Activated T-helper 1 cell treated with anti-CD3 and anti-CD28 coated beads, Interleukin-12 subunit alpha, Interleukin-12 subunit beta, Interleukin-2, Interleukin-4 antibody, amounts not matched to agents 30 ng/mL and 10 ng/mL and 1 ng/mL, durations not matched to agents 14 hours and 24 hours and 36 hours (primary cell): ENCODE measurements at regions of chr16 and their contacts with region 1.

Region 1: GRCh38 chr16:24253192-24253591 is 2.9 kb upstream of the CACNG3 start:
- DNase-seq: peak; percentile 6
- H3K4me3 Mint-ChIP-seq: no peak overlapping the region
- H3K27ac Mint-ChIP-seq: no peak overlapping the region
- H3K4me1 Mint-ChIP-seq: no peaks in the 10 kb centered on the region
- H3K27me3 Mint-ChIP-seq: peaks cover 28% of the 10 kb centered on the region

Region 2: DNA sequence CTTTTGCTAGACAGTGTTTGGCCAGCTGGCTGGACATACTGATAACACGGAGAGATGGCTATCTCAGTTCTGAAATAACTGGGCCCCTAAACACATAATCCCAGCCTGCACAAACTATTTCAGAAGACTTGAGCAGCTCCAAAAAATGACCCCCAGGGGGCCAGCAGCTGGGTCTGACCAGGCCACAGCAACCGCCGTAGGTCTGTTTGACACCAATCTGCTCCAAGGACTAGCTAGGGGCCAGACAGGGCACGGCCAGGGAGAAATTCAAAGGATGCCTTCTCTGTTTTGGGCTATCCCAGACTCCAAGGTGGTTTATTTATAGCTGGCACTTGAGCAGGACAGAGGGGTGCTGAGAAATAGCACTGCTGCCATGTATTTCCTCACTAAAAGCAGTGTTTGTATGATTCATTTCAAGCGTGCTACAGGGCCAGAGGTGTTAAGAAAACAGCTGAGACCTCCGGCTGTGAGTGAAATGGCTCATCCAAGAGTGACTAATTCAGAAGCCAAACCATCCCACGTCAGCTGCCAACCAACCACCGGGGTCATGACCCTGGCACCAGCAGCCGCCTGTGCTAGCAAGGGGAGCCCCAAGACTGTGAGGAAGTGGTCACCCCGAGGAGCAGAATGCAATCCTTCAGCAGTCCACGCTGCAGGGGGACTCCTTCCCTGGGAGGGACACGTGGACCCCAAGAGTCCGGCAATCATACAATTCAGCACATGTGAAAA is 748.6 kb before region 1 on chr16:
- intact Hi-C with region 1: loop called (anchors 5 kb)
- DNase-seq: peak; percentile 68
- H3K4me3 Mint-ChIP-seq: peak overlapping the region; percentile 46
- H3K27ac Mint-ChIP-seq: peak overlapping the region; percentile 79
- H3K4me1 Mint-ChIP-seq: peaks cover 72% of the 10 kb centered on the region
- H3K27me3 Mint-ChIP-seq: no peaks in the 10 kb centered on the region

Region 3: GRCh38 chr16:23959072-23959751 is 294.0 kb before region 1 on chr16:
- intact Hi-C with region 1: loop called (anchors 5 kb)
- DNase-seq: no peak
- H3K4me3 Mint-ChIP-seq: peak overlapping the region; percentile 54
- H3K27ac Mint-ChIP-seq: peak overlapping the region; percentile 82
- H3K4me1 Mint-ChIP-seq: peaks cover 66% of the 10 kb centered on the region
- H3K27me3 Mint-ChIP-seq: no peaks in the 10 kb centered on the region

Region 4: DNA sequence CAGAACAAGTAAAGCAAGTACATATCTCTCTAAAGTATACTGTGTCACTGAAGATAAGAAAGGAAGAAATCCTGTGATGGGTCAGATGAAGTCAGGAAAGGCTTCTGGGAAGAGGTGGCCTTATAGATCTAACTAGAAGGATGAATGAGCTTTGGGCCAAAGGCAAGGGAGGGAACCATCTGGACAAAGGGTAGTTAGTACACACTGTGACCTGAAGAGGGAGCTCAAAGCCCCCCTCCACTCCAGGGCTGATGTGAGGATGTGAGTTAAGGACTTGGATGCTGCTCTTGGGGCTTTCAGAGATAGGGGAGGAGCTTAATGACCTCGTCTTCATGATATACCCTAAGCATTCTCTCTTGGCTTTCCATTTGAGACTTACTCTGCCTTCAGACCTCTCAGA is 182.3 kb before region 1 on chr16:
- intact Hi-C with region 1: loop called (anchors 1 kb)
- DNase-seq: peak; percentile 6
- H3K4me3 Mint-ChIP-seq: no peak overlapping the region
- H3K27ac Mint-ChIP-seq: no peak overlapping the region
- H3K4me1 Mint-ChIP-seq: peaks cover 20% of the 10 kb centered on the region
- H3K27me3 Mint-ChIP-seq: no peaks in the 10 kb centered on the region

Region 5: GRCh38 chr16:24504472-24505345 is 251.5 kb after region 1 on chr16:
- intact Hi-C with region 1: loop called (anchors 1 kb)
- DNase-seq: peak; percentile 50
- H3K4me3 Mint-ChIP-seq: no peak overlapping the region
- H3K27ac Mint-ChIP-seq: no peak overlapping the region
- H3K4me1 Mint-ChIP-seq: peaks cover 8% of the 10 kb centered on the region
- H3K27me3 Mint-ChIP-seq: peaks cover 8% of the 10 kb centered on the region